ENCODE measurements at regions of chr2 and their contacts with region 1.

Region 1: DNA sequence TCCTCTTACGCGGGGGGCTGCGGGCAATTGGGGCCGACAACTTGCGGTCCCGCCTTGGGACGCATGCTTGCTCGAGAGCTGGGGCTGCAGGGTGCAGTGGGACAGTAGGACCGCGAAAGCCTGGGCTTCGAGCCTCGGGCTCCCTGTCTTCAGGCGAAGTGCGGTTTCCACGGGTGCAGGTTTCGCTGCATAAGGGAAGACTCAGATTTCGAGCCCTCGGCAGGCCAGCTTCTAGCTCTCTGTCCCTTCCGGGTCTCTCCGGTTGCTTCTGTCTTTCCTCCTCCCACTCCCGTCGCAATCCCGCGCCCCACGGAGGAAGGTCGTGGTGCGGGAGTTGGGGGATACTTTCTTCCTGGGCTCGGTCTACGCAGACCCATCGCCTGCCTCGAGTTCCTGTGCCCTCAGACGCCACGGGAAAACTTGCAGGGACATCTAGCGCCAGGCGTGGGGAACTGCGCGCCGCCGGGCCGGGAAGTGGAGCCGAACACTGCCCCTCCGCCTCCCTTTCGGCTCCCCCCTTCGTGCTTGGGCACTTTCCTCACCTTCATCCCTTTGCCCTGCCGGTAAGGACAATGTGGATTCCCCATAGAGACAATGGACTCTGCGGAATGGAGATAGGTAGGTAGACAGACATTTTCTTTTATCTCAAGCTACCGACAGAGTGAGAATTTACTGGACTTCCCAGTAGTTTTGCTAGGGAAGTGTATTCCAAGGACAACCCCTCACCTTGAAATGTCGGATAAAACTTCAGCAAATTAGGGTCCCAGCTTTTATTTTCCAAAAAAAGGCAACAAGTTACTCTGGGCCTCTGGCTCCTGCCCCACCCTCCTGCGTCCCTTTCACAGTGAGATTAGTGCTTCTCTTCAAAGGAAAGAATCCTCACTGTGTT is 4.2 kb upstream of the HOXD13 start:
- ATAC-seq: peak; percentile 43 to 76 (median 64)
- H3K4me3 ChIP-seq: peak overlapping the region in 4 of 5 donors; percentile 12 to 30 (median 27)
- H3K27ac ChIP-seq: no peak overlapping the region
- H3K4me1 ChIP-seq: peaks cover 12 to 15% of the 10 kb centered on the region in 2 donors

Region 2: DNA sequence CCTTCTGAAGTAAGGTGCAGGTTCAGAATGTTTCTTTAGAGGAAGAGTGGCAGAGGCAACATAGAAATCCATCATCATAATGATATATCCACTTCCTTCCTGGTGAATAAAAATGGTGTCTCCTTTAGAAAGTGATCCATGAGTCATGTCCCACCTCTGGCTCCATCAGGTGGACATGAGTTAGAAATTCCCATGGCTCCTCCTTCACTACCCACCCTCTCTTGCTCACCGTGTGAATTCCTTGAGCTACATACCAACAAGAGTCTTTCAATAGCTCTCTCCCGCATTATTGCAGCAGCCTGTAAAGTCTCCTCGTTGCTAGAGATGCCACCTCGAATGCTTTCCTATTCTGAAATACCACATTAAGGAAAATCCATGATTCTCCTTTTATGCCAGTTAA is 403.8 kb before region 1 on chr2:
- in situ Hi-C with region 1: loop called in 3 of 9 experiments (anchors 10 to 25 kb)
- ATAC-seq: no peak
- H3K4me3 ChIP-seq: no peak overlapping the region
- H3K27ac ChIP-seq: no peak overlapping the region
- H3K4me1 ChIP-seq: peaks cover 0 to 23% of the 10 kb centered on the region in 2 donors

Region 3: GRCh38 chr2:176157499-176158185 is 69.3 kb after region 1 on chr2:
- in situ Hi-C with region 1: no loop called
- ATAC-seq: peak; percentile 13 to 64 (median 54)
- H3K4me3 ChIP-seq: peak overlapping the region; percentile 20 to 42 (median 40)
- H3K27ac ChIP-seq: peak overlapping the region; percentile 89 to 94
- H3K4me1 ChIP-seq: peaks cover 39 to 99% of the 10 kb centered on the region in 2 donors

Region 4: GRCh38 chr2:176269319-176270099 is 181.2 kb after region 1 on chr2 and contains the start of gene MTX2:
- in situ Hi-C with region 1: no loop called
- ATAC-seq: peak; percentile 92 to 100 (median 99)
- H3K4me3 ChIP-seq: peak within 1 kb of the TSS; percentile 58 to 89 (median 66)
- H3K27ac ChIP-seq: peak within 1 kb of the TSS; percentile 87 to 89
- H3K4me1 ChIP-seq: peaks cover 7 to 11% of the 10 kb centered on the region in 2 donors
- total RNA-seq, gene MTX2: 46.0 to 69.5 (median 59.2) TPM

Region 5: DNA sequence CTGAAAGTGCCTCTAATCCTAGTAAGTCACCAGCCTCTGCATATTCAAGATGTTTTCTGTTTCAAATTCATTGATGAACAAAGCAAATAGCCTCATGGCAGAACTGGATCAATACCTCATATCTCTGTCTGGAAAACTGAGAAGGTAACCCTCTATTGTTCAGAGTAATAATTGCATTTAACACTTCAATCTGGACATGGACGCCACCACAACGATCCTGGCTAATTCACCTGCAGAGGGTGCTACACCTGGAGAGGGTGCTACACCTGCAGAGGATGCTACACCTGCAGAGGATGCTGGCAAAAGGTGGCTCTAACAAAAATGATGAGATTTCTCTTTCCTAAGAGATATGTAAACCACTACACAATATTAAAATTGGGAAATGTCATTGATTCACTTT is 941.2 kb after region 1 on chr2:
- in situ Hi-C with region 1: no loop called
- ATAC-seq: no peak
- H3K4me3 ChIP-seq: no peak overlapping the region
- H3K27ac ChIP-seq: no peak overlapping the region
- H3K4me1 ChIP-seq: peaks cover 25 to 42% of the 10 kb centered on the region in 2 donors

Measured in motor neuron (in vitro differentiated cells).